Right cardiac atrium (tissue), 5 donors: ENCODE measurements at regions of chr14 and their contacts with region 1.

Region 1: GRCh38 chr14:75487155-75487671 is 35.1 kb upstream of the BATF start:
- DNase-seq: no peak
- ATAC-seq: no peak
- H3K4me3 ChIP-seq: no peak overlapping the region
- H3K27ac ChIP-seq: no peak overlapping the region
- H3K4me1 ChIP-seq: no peaks in the 10 kb centered on the region
- H3K27me3 ChIP-seq: no peaks in the 10 kb centered on the region

Region 2: GRCh38 chr14:75126679-75127473 is 360.3 kb before region 1 on chr14 and contains the start of gene NEK9:
- intact Hi-C with region 1: loop called in 2 of 4 experiments (anchors 10 kb)
- DNase-seq: peak; percentile 92 to 96 (median 96)
- ATAC-seq: peak; percentile 93 to 95
- H3K4me3 ChIP-seq: peak within 1 kb of the TSS; percentile 59
- H3K27ac ChIP-seq: peak within 1 kb of the TSS; percentile 89
- H3K4me1 ChIP-seq: peaks cover 2% of the 10 kb centered on the region
- H3K27me3 ChIP-seq: no peaks in the 10 kb centered on the region
- total RNA-seq, gene NEK9: 112 to 129 (median 123) TPM

Region 3: DNA sequence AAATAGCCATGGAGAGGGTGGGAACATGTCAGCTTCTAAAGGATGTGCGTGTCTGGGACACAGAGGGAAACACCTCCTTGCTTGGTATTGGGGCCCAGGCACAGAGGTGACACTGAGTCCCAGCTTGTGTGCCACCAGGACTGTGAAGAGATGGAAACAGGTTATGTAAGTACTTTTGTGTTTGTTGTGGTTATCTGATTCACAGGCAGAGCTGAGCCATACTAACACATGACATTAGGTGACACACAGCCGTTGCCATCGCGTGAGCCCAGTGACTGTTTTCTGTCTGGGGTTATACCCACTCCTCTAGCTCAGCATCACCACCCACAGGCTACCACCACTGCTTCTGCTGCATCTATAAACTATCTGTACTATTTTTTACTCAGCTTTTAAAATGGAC is 79.1 kb after region 1 on chr14:
- intact Hi-C with region 1: no loop called
- DNase-seq: no peak
- ATAC-seq: peak; percentile 17 to 61
- H3K4me3 ChIP-seq: no peak overlapping the region
- H3K27ac ChIP-seq: peak overlapping the region; percentile 7
- H3K4me1 ChIP-seq: no peaks in the 10 kb centered on the region
- H3K27me3 ChIP-seq: no peaks in the 10 kb centered on the region

Region 4: GRCh38 chr14:76355771-76356170 is 868.6 kb after region 1 on chr14:
- intact Hi-C with region 1: no loop called
- DNase-seq: no peak
- ATAC-seq: no peak
- H3K4me3 ChIP-seq: no peak overlapping the region
- H3K27ac ChIP-seq: no peak overlapping the region
- H3K4me1 ChIP-seq: no peaks in the 10 kb centered on the region
- H3K27me3 ChIP-seq: no peaks in the 10 kb centered on the region